A673 (cell line): ENCODE measurements at regions of chr6 and their contacts with region 1.

Region 1: GRCh38 chr6:143575440-143575839 is 63.9 kb upstream of the FUCA2 start:
- DNase-seq: peak; percentile 74
- H3K4me3 ChIP-seq: no peak overlapping the region
- H3K27ac ChIP-seq: no peak overlapping the region
- H3K4me1 ChIP-seq: no peaks in the 10 kb centered on the region
- H3K27me3 ChIP-seq: no peaks in the 10 kb centered on the region
- CTCF ChIP-seq: peak; percentile 88

Region 2: DNA sequence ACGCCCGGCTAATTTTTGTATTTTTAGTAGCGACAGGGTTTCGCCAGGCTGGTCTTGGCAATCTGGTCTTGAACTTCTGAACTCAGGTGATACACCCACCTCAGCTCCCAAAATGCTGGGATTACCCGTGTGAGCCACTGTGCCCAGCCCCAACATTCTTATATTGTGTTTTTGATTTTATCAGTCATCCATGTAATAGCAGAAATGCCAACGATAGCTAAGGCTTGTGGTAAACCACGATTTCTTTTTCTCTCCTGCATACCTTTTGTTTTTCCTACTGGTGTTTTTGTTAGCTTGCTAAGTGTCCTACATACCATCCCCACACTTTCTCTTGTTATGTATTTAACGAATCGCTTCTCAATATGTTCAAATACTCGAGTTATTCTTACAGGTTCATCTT is 114.4 kb after region 1 on chr6:
- CTCF ChIA-PET with region 1: no interaction called
- POLR2A ChIA-PET with region 1: no interaction called
- intact Hi-C with region 1: no loop called
- DNase-seq: no peak
- H3K4me3 ChIP-seq: no peak overlapping the region
- H3K27ac ChIP-seq: no peak overlapping the region
- H3K4me1 ChIP-seq: no peaks in the 10 kb centered on the region
- H3K27me3 ChIP-seq: no peaks in the 10 kb centered on the region
- CTCF ChIP-seq: no peak

Region 3: GRCh38 chr6:143940011-143940597 is 364.7 kb after region 1 on chr6:
- CTCF ChIA-PET with region 1: interaction called, 5 read pairs
- POLR2A ChIA-PET with region 1: no interaction called
- intact Hi-C with region 1: loop called (anchors 2 kb)
- DNase-seq: peak; percentile 42
- H3K4me3 ChIP-seq: no peak overlapping the region
- H3K27ac ChIP-seq: no peak overlapping the region
- H3K4me1 ChIP-seq: no peaks in the 10 kb centered on the region
- H3K27me3 ChIP-seq: no peaks in the 10 kb centered on the region
- CTCF ChIP-seq: peak; percentile 56

Region 4: GRCh38 chr6:144482142-144482541 is 906.7 kb after region 1 on chr6:
- CTCF ChIA-PET with region 1: no interaction called
- POLR2A ChIA-PET with region 1: no interaction called
- intact Hi-C with region 1: loop called (anchors 5 kb)
- DNase-seq: peak; percentile 86
- H3K4me3 ChIP-seq: no peak overlapping the region
- H3K27ac ChIP-seq: no peak overlapping the region
- H3K4me1 ChIP-seq: no peaks in the 10 kb centered on the region
- H3K27me3 ChIP-seq: no peaks in the 10 kb centered on the region
- CTCF ChIP-seq: peak; percentile 80